ENCODE measurements at regions of chr2 and their contacts with region 1.

Region 1: DNA sequence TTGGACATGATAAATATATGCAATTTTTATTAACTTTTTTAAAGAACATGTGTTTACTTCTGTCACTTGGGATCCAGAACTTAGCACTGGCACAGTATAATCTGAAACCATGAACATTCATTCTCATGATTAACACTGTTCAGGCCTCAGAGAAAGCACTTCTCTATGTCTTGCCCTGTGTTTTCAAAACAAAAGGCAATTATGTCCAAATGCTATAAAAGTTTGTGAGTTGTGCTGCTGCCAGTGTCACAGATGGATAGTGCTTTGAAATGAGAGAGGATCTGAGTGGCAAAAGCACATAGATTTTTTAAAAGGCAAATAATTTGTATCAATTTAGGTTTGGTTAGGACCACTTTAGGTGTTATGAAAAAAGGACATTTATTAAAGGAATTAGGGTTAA is 470.5 kb upstream of the FAM98A start:
- DNase-seq: no peak
- ATAC-seq: no peak
- H3K4me3 ChIP-seq: no peak overlapping the region
- H3K4me3 Mint-ChIP-seq: no peak overlapping the region
- H3K27ac ChIP-seq: no peak overlapping the region
- H3K27ac Mint-ChIP-seq: no peak overlapping the region
- H3K4me1 ChIP-seq: no peaks in the 10 kb centered on the region
- H3K4me1 Mint-ChIP-seq: no peaks in the 10 kb centered on the region
- H3K27me3 ChIP-seq: no peaks in the 10 kb centered on the region
- H3K27me3 Mint-ChIP-seq: no peaks in the 10 kb centered on the region
- CTCF ChIP-seq: no peak

Region 2: DNA sequence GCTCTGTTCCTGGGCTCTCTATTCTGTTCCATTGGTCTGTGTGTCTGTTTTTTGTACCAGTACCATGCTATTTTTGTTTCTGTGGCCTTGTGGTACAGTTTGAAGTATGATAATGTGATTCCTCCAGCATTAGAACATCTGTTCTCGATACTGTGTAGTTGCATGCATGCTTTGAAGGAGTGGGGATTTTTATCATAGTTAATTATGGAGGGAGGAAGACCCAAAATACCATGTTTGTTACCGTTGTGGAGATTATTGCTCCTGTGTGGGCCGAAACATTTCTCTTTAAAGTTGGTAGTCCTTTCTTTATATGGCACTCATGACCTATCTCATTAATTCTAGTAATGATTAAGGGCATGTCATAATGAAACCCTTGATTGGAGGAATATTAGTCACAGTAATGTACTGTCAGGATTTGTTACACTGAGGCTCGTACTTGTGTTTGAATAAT is 1354.2 kb before region 1 on chr2:
- CTCF ChIA-PET with region 1: no interaction called
- POLR2A ChIA-PET with region 1: no interaction called
- intact Hi-C with region 1: loop called in 1 of 2 experiments (anchors 10 kb)
- DNase-seq: no peak
- ATAC-seq: no peak
- H3K4me3 ChIP-seq: no peak overlapping the region
- H3K4me3 Mint-ChIP-seq: no peak overlapping the region
- H3K27ac ChIP-seq: no peak overlapping the region
- H3K27ac Mint-ChIP-seq: no peak overlapping the region
- H3K4me1 ChIP-seq: no peaks in the 10 kb centered on the region
- H3K4me1 Mint-ChIP-seq: peaks cover 4% of the 10 kb centered on the region
- H3K27me3 ChIP-seq: no peaks in the 10 kb centered on the region
- H3K27me3 Mint-ChIP-seq: no peaks in the 10 kb centered on the region
- CTCF ChIP-seq: no peak

Region 3: GRCh38 chr2:33395655-33396249 is 673.9 kb before region 1 on chr2:
- CTCF ChIA-PET with region 1: no interaction called
- POLR2A ChIA-PET with region 1: no interaction called
- intact Hi-C with region 1: no loop called
- DNase-seq: peak in 7 of 9 experiments; percentile 3 to 53 (median 30)
- ATAC-seq: no peak
- H3K4me3 ChIP-seq: no peak overlapping the region
- H3K4me3 Mint-ChIP-seq: no peak overlapping the region
- H3K27ac ChIP-seq: no peak overlapping the region
- H3K27ac Mint-ChIP-seq: no peak overlapping the region
- H3K4me1 ChIP-seq: no peaks in the 10 kb centered on the region
- H3K4me1 Mint-ChIP-seq: no peaks in the 10 kb centered on the region
- H3K27me3 ChIP-seq: no peaks in the 10 kb centered on the region
- H3K27me3 Mint-ChIP-seq: no peaks in the 10 kb centered on the region
- CTCF ChIP-seq: peak; percentile 53

Region 4: DNA sequence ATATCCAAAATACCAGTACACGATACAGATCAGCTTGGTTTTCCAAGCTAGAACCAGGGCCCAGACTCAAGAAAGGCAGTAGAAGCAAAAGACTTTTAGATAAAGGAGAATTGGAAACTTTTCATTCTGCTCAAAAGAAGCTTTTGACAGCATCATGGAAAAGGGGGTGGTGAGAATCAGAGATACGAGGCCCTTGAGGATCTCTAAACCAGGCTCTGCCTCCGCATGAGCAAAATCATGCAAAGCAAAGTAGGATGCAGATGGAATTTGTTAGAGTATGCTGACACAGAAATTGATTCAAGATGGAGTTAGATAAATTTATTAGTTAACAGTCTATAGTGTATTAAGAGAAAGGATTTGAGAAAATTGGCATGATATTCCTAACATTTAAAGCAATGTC is 510.3 kb before region 1 on chr2:
- CTCF ChIA-PET with region 1: no interaction called
- POLR2A ChIA-PET with region 1: no interaction called
- intact Hi-C with region 1: no loop called
- DNase-seq: no peak
- ATAC-seq: no peak
- H3K4me3 ChIP-seq: no peak overlapping the region
- H3K4me3 Mint-ChIP-seq: no peak overlapping the region
- H3K27ac ChIP-seq: no peak overlapping the region
- H3K27ac Mint-ChIP-seq: no peak overlapping the region
- H3K4me1 ChIP-seq: no peaks in the 10 kb centered on the region
- H3K4me1 Mint-ChIP-seq: no peaks in the 10 kb centered on the region
- H3K27me3 ChIP-seq: no peaks in the 10 kb centered on the region
- H3K27me3 Mint-ChIP-seq: no peaks in the 10 kb centered on the region
- CTCF ChIP-seq: no peak

Region 5: DNA sequence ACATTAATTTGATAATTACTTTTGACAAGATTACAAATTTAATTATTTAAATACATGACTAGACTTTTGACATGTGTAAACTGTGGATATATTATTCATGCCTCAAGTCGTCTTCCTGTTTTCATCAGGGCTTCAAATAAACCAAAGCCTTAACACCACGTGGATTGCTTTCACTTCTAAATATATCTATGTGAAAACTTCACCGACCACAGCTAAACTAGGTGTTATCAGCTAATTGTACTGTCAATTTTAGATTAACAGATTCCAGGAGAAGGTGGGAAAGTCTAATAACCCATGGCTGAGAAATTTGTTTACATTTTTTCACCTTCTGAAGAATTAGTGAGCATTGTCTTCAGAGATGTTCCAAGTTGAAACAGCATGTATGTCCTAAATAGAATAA is 24.2 kb after region 1 on chr2:
- CTCF ChIA-PET with region 1: no interaction called
- POLR2A ChIA-PET with region 1: no interaction called
- intact Hi-C with region 1: no loop called
- DNase-seq: no peak
- ATAC-seq: no peak
- H3K4me3 ChIP-seq: no peak overlapping the region
- H3K4me3 Mint-ChIP-seq: no peak overlapping the region
- H3K27ac ChIP-seq: no peak overlapping the region
- H3K27ac Mint-ChIP-seq: no peak overlapping the region
- H3K4me1 ChIP-seq: no peaks in the 10 kb centered on the region
- H3K4me1 Mint-ChIP-seq: no peaks in the 10 kb centered on the region
- H3K27me3 ChIP-seq: no peaks in the 10 kb centered on the region
- H3K27me3 Mint-ChIP-seq: no peaks in the 10 kb centered on the region
- CTCF ChIP-seq: no peak

Region 6: DNA sequence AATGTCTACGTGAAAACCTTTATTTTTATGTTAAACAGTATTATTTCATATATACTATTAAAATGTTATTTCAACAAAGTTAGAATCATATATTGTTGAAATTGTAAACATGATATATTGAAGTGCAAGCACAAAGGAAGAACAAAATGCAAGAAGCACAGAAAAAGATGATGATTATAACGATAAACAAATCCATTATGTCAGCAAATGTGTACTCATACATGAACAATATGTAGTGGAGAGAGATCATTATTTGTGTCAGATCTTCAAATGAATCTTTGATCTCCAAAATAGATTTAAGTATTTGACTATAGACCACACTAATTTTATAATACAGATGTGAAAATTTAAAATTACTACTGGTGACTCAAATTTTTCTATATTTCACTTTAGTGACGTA is 1181.6 kb after region 1 on chr2:
- CTCF ChIA-PET with region 1: no interaction called
- POLR2A ChIA-PET with region 1: no interaction called
- intact Hi-C with region 1: no loop called
- DNase-seq: no peak
- ATAC-seq: no peak
- H3K4me3 ChIP-seq: no peak overlapping the region
- H3K4me3 Mint-ChIP-seq: no peak overlapping the region
- H3K27ac ChIP-seq: no peak overlapping the region
- H3K27ac Mint-ChIP-seq: no peak overlapping the region
- H3K4me1 ChIP-seq: no peaks in the 10 kb centered on the region
- H3K4me1 Mint-ChIP-seq: no peaks in the 10 kb centered on the region
- H3K27me3 ChIP-seq: no peaks in the 10 kb centered on the region
- H3K27me3 Mint-ChIP-seq: no peaks in the 10 kb centered on the region
- CTCF ChIP-seq: no peak